WTC11 (cell line): ENCODE measurements at regions of chr7 and their contacts with region 1.

Region 1: DNA sequence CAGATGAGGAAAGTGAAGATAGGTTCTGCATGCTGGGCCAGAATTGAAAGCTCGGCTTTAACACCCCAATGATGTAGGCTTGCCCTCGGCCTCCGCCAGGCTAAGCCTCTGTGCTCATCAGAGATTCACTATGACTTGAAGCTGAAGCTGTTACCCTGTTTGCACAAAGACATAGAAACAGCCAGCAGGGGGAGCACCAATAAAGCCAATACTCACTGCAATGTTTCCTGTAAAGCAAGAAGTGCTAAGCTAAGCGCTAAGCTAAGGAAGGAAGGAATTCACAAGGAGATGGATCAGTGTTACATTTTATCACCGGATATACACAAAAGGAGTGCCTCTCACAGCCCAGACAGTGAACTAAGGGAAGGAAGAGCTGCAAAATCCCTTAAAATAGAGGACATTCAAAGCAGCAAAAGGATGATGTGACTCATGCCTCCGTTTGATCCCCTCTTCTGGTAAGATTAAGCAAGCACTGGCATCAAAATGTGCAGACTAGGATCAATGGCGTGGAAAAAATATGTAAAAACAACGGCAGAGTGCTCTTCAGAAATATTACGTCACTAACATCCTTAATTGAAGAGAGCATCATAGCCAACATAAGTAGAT is 153.8 kb downstream of the COBL start:
- DNase-seq: peak; percentile 91
- ATAC-seq: peak; percentile 91
- H3K4me3 Mint-ChIP-seq: no peak overlapping the region
- H3K27ac Mint-ChIP-seq: peak overlapping the region; percentile 15; the same call in 1 of the 2 replicates
- H3K4me1 Mint-ChIP-seq: peaks cover 25% of the 10 kb centered on the region
- H3K27me3 Mint-ChIP-seq: no peaks in the 10 kb centered on the region
- CTCF ChIP-seq: peak; percentile 81

Region 2: GRCh38 chr7:50467817-50468610 is 694.8 kb before region 1 on chr7:
- CTCF ChIA-PET with region 1: interaction called, 11 read pairs
- POLR2A ChIA-PET with region 1: no interaction called
- DNase-seq: peak; percentile 86
- ATAC-seq: peak; percentile 91
- H3K4me3 Mint-ChIP-seq: no peak overlapping the region
- H3K27ac Mint-ChIP-seq: no peak overlapping the region
- H3K4me1 Mint-ChIP-seq: 0 out of 2 replicates have a peak, but pooled peaks cover 5% of the 10 kb centered on the region
- H3K27me3 Mint-ChIP-seq: peaks cover 27% of the 10 kb centered on the region
- CTCF ChIP-seq: peak; percentile 77

Region 3: GRCh38 chr7:51034521-51035264 is 128.1 kb before region 1 on chr7:
- CTCF ChIA-PET with region 1: interaction called, 10 read pairs
- POLR2A ChIA-PET with region 1: no interaction called
- DNase-seq: no peak
- ATAC-seq: peak; percentile 66
- H3K4me3 Mint-ChIP-seq: no peak overlapping the region
- H3K27ac Mint-ChIP-seq: peak overlapping the region; percentile 77
- H3K4me1 Mint-ChIP-seq: peaks cover 19% of the 10 kb centered on the region
- H3K27me3 Mint-ChIP-seq: no peaks in the 10 kb centered on the region
- CTCF ChIP-seq: no peak

Region 4: GRCh38 chr7:51141451-51142003 is 21.3 kb before region 1 on chr7:
- CTCF ChIA-PET with region 1: interaction called, 37 read pairs
- POLR2A ChIA-PET with region 1: no interaction called
- DNase-seq: no peak
- ATAC-seq: peak; percentile 57
- H3K4me3 Mint-ChIP-seq: no peak overlapping the region
- H3K27ac Mint-ChIP-seq: peak overlapping the region; percentile 4; the same call in 1 of the 2 replicates
- H3K4me1 Mint-ChIP-seq: peaks cover 42% of the 10 kb centered on the region
- H3K27me3 Mint-ChIP-seq: no peaks in the 10 kb centered on the region
- CTCF ChIP-seq: no peak; the same call in 1 of the 2 replicates

Region 5: DNA sequence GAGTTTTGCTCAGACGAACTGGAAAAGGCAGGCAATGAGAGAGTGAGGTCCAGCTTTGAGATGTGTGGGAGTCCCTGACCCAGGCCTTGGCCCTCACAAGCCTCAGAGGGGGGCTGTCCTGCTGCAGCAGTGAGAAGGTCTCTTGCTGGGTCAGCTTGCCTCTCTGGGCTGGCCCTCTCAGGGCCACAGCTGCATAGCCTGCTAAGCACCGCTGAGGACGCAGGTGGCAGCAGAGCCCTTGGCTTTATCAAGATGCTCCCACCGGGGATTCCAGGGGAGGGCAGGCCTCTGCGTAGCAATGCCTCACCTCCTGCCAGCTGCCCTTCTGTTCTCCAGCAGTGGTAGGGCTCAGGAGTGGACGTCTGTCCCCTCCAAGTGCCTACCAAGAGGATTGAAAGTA is 25.1 kb after region 1 on chr7:
- CTCF ChIA-PET with region 1: interaction called, 60 read pairs
- POLR2A ChIA-PET with region 1: no interaction called
- DNase-seq: peak; percentile 84
- ATAC-seq: peak; percentile 100
- H3K4me3 Mint-ChIP-seq: no peak overlapping the region
- H3K27ac Mint-ChIP-seq: peak overlapping the region; percentile 89
- H3K4me1 Mint-ChIP-seq: peaks cover 9% of the 10 kb centered on the region
- H3K27me3 Mint-ChIP-seq: no peaks in the 10 kb centered on the region
- CTCF ChIP-seq: no peak; the same call in 1 of the 2 replicates

Region 6: DNA sequence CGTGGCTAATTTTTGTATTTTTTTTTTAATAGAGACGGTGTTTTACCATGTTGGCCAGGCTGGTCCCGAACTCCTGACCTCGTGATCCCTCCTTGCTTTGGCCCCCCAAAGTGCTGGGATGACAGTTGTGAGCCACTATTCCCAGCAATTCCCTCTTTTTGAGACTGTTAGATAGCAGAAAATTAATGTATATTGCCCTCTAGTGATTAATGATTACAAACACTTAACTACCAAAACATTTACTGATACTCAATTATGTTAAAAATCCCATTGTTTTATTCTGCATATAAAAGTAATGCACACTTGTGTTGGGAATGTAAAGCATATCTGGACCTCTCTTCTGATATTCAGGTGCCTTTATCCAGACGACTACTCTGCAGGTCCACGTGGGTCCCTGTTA is 195.0 kb after region 1 on chr7:
- CTCF ChIA-PET with region 1: interaction called, 21 read pairs
- POLR2A ChIA-PET with region 1: no interaction called
- DNase-seq: no peak
- ATAC-seq: no peak
- H3K4me3 Mint-ChIP-seq: no peak overlapping the region
- H3K27ac Mint-ChIP-seq: no peak overlapping the region
- H3K4me1 Mint-ChIP-seq: peaks cover 20% of the 10 kb centered on the region
- H3K27me3 Mint-ChIP-seq: no peaks in the 10 kb centered on the region; the same call in 1 of the 2 replicates
- CTCF ChIP-seq: no peak

Region 7: DNA sequence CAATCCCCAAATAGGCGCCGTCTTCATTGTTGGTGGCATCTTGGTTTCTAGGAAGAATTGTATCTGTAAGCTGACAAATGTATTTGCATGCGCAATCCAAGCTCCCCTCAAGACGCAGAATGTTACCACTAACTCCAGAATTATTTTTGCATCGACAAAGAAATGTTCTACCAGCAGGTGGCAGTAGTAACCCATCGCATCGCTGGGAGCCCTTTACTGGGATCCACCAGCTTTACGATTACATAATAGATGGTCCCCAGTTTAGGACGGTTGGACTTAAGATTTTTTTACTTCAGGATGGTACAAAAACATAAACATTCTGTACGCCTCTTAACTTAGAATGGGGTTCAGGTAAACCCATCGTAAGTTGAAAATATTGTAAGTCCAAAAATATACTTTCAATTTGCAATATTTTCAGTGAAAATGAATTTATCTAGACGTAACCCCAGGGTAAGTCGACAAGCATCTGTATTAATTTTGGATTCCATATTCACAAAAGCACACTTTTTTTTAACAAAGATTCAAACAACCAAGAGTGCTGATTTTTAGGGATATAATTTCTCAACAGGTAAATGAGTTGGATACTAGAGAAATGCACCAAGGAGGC is 267.8 kb after region 1 on chr7:
- CTCF ChIA-PET with region 1: interaction called, 18 read pairs
- POLR2A ChIA-PET with region 1: no interaction called
- DNase-seq: peak; percentile 69
- ATAC-seq: 0 out of 2 replicates have a peak, but pooled peaks have one; percentile 43
- H3K4me3 Mint-ChIP-seq: no peak overlapping the region
- H3K27ac Mint-ChIP-seq: no peak overlapping the region
- H3K4me1 Mint-ChIP-seq: peaks cover 5% of the 10 kb centered on the region; the same call in 1 of the 2 replicates
- H3K27me3 Mint-ChIP-seq: no peaks in the 10 kb centered on the region
- CTCF ChIP-seq: peak; percentile 82